Activated CD4-positive, alpha-beta T cell treated with anti-CD3 and anti-CD28 coated beads, Interleukin-2, amount 10 ng/mL, durations not matched to agents 7 days and 5 days (primary cell): ENCODE measurements at regions of chr17 and their contacts with region 1.

Region 1: DNA sequence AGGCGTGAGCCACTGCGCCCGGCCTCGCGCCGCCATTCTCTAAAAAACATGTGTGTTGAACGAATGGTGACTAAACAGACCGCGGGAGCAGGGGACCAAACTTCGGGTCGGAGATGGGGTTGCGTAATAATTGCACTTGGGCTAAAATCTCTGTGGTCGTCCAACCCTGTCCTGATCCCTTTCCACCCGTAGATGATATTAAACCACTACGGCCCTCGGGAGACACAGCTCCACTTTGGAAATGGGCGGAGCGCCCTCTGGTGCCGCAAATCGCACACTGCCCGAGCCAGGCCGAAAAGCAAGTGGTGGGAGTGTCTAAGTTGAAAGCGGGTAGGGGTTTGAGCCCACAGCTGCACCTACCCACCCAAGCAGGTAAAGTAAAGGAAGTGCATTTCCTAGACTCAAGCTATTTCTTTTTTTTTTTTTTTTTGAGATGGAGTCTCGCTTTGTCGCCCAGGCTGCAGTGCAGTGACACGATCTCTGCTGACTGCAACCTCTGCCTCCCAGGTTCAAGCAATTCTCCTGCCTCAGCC is 17.0 kb downstream of the CAVIN1 start:
- DNase-seq: peak; percentile 84
- H3K4me3 Mint-ChIP-seq: no peak overlapping the region
- H3K27ac Mint-ChIP-seq: no peak overlapping the region
- H3K4me1 Mint-ChIP-seq: peaks cover 23% of the 10 kb centered on the region
- H3K27me3 Mint-ChIP-seq: no peaks in the 10 kb centered on the region

Region 2: GRCh38 chr17:42221937-42222745 is 183.9 kb before region 1 on chr17:
- CTCF ChIA-PET with region 1: interaction called, 10 read pairs
- POLR2A ChIA-PET with region 1: no interaction called
- DNase-seq: peak; percentile 66
- H3K4me3 Mint-ChIP-seq: no peak overlapping the region
- H3K27ac Mint-ChIP-seq: peak overlapping the region; percentile 6
- H3K4me1 Mint-ChIP-seq: peaks cover 3% of the 10 kb centered on the region
- H3K27me3 Mint-ChIP-seq: no peaks in the 10 kb centered on the region

Region 3: GRCh38 chr17:42322382-42323267 is 83.4 kb before region 1 on chr17:
- CTCF ChIA-PET with region 1: interaction called, 357 read pairs
- POLR2A ChIA-PET with region 1: no interaction called
- DNase-seq: peak; percentile 98
- H3K4me3 Mint-ChIP-seq: no peak overlapping the region
- H3K27ac Mint-ChIP-seq: peak overlapping the region; percentile 76
- H3K4me1 Mint-ChIP-seq: peaks cover 50% of the 10 kb centered on the region
- H3K27me3 Mint-ChIP-seq: no peaks in the 10 kb centered on the region

Region 4: GRCh38 chr17:42337442-42337841 is 68.6 kb before region 1 on chr17:
- CTCF ChIA-PET with region 1: interaction called, 15 read pairs
- POLR2A ChIA-PET with region 1: no interaction called
- DNase-seq: peak; percentile 86
- H3K4me3 Mint-ChIP-seq: peak overlapping the region; percentile 54
- H3K27ac Mint-ChIP-seq: peak overlapping the region; percentile 92
- H3K4me1 Mint-ChIP-seq: peaks cover 75% of the 10 kb centered on the region
- H3K27me3 Mint-ChIP-seq: no peaks in the 10 kb centered on the region

Region 5: GRCh38 chr17:42361781-42362186 is 44.2 kb before region 1 on chr17:
- CTCF ChIA-PET with region 1: interaction called, 10 read pairs
- POLR2A ChIA-PET with region 1: no interaction called
- DNase-seq: peak; percentile 40
- H3K4me3 Mint-ChIP-seq: no peak overlapping the region
- H3K27ac Mint-ChIP-seq: peak overlapping the region; percentile 78
- H3K4me1 Mint-ChIP-seq: peaks cover 66% of the 10 kb centered on the region
- H3K27me3 Mint-ChIP-seq: no peaks in the 10 kb centered on the region

Region 6: DNA sequence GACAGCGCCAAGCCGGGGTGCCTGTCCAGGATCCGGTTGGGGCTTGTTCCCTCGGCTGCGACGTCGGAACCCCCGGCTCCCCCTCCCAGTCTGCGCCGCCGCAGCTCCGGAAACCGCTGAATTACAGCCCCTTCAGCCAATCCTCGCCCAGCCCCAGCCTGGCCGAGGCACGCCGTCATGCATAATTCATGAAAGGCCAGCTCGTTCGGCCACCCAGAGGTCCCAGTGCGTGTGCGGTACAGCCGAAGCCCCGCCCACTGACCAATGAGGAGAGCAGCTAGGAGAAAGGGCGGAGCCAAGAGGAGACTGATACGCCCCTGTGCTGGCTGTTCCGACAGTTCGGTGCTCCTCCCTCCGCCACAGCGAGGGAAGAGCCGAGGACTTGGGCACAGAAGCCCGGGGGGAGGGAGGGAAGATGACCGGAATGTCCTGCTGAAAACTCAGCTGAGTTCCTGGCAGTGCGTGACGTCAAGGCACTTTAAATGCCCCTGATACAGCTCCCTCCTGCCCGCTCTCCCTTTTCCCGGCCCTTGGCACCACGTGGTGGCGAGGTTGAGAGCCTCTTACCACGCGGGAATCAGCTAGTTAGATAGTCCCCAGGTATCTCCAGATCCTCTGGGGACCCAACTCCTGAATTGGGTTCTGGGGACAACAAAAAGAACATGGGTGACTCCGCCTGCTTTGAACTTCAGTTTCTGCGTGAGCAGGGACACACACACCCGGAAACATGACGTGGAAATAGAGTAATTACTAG is 17.5 kb before region 1 on chr17 and contains the start of gene STAT3:
- CTCF ChIA-PET with region 1: interaction called, 50 read pairs
- POLR2A ChIA-PET with region 1: interaction called, 4 read pairs
- DNase-seq: peak; percentile 100
- H3K4me3 Mint-ChIP-seq: peak within 1 kb of the TSS; percentile 97
- H3K27ac Mint-ChIP-seq: peak within 1 kb of the TSS; percentile 100
- H3K4me1 Mint-ChIP-seq: peaks cover 52% of the 10 kb centered on the region
- H3K27me3 Mint-ChIP-seq: no peaks in the 10 kb centered on the region
- total RNA-seq, gene STAT3: 114 to 121 TPM

Region 7: GRCh38 chr17:42422958-42423712 is 17.1 kb after region 1 on chr17 and contains the start of gene CAVIN1:
- CTCF ChIA-PET with region 1: interaction called, 12 read pairs
- POLR2A ChIA-PET with region 1: no interaction called
- DNase-seq: peak; percentile 21
- H3K4me3 Mint-ChIP-seq: peak within 1 kb of the TSS; percentile 67
- H3K27ac Mint-ChIP-seq: no peak within 1 kb of the TSS
- H3K4me1 Mint-ChIP-seq: peaks cover 19% of the 10 kb centered on the region
- H3K27me3 Mint-ChIP-seq: peaks cover 54% of the 10 kb centered on the region
- total RNA-seq, gene CAVIN1: 1.5 to 1.6 TPM

Region 8: DNA sequence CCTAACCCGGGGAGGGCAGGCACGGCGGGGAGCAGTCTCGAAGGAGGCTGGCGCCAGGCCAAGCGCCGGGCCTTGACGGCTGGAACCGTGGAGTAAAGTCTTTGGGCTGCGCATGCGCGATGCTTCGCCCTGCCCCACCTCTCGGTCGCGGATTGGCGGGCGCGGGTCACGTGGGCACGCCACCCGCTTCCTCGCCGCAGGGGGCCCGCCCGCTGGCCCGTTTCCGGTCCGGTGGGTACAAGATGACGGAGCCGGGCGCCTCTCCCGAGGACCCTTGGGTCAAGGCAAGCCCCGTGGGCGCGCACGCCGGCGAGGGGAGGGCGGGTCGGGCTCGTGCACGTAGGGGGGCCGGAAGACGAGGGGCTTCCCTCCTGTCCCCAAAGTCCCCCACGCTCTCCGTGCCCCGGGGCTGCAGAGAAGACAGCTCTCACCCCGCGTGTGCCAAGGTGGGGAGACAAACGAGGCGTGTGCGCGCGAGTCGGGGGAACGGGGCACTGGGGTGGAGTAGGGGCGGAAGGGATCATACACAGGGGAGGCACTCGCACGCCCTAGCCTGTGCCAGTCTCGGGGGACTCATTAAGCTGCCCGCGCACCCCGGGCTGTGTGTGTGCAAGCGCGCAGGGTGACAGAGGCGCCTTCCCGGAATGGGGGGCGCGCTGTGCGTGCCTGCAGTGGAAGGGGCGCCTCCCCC is 161.0 kb after region 1 on chr17 and contains the start of gene MLX:
- CTCF ChIA-PET with region 1: no interaction called
- POLR2A ChIA-PET with region 1: no interaction called
- DNase-seq: peak; percentile 91
- H3K4me3 Mint-ChIP-seq: peak within 1 kb of the TSS; percentile 92
- H3K27ac Mint-ChIP-seq: peak within 1 kb of the TSS; percentile 95
- H3K4me1 Mint-ChIP-seq: peaks cover 45% of the 10 kb centered on the region
- H3K27me3 Mint-ChIP-seq: no peaks in the 10 kb centered on the region
- total RNA-seq, gene MLX: 56.7 to 62.3 TPM

Region 9: GRCh38 chr17:42629411-42630009 is 223.5 kb after region 1 on chr17:
- CTCF ChIA-PET with region 1: no interaction called
- POLR2A ChIA-PET with region 1: no interaction called
- DNase-seq: no peak
- H3K4me3 Mint-ChIP-seq: no peak overlapping the region
- H3K27ac Mint-ChIP-seq: no peak overlapping the region
- H3K4me1 Mint-ChIP-seq: no peaks in the 10 kb centered on the region
- H3K27me3 Mint-ChIP-seq: peaks cover 2% of the 10 kb centered on the region